Dorsolateral prefrontal cortex (tissue), 120 donors: ENCODE measurements at regions of chr2 and their contacts with region 1.

Region 1: GRCh38 chr2:161586517-161587167 is 37.6 kb upstream of the SLC4A10 start:
- DNase-seq: no peak
- H3K4me3 ChIP-seq: peak overlapping the region in 39 of 59 donors; percentile 0 to 50 (median 23)
- H3K27ac ChIP-seq: peak overlapping the region in 39 of 59 donors; percentile 5 to 83 (median 50)
- H3K27me3 ChIP-seq: no peaks in the 10 kb centered on the region
- CTCF ChIP-seq: peak; percentile 56 to 86 (median 74)

Region 2: GRCh38 chr2:161651547-161651946 is 64.9 kb after region 1 on chr2:
- intact Hi-C with region 1: no loop called
- DNase-seq: peak in 1 of 10 donors; percentile 30
- H3K4me3 ChIP-seq: no peak overlapping the region
- H3K27ac ChIP-seq: no peak overlapping the region
- H3K27me3 ChIP-seq: no peaks in the 10 kb centered on the region
- CTCF ChIP-seq: no peak

Region 3: DNA sequence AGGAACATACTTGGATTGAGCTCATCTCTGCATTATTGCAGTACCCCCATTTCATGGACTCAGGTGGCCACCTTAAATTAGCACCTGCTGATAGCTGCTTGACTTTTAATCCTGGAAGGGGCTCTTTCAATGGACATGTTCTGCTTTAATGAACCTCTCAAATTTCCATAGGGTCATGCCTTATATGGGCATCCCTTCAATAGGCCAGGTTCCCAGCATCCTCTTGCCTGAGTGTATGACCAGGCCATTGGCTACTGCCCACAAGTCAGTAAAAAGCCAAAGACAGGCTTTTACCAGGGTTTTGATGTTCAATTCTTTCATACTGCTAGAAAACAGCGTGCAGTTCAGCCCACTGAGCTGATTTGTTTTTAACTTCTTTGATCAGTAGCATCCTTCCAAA is 153.1 kb after region 1 on chr2:
- intact Hi-C with region 1: no loop called
- DNase-seq: no peak
- H3K4me3 ChIP-seq: no peak overlapping the region
- H3K27ac ChIP-seq: no peak overlapping the region
- H3K27me3 ChIP-seq: no peaks in the 10 kb centered on the region
- CTCF ChIP-seq: no peak

Region 4: GRCh38 chr2:161946489-161947107 is 360.0 kb after region 1 on chr2:
- intact Hi-C with region 1: loop called (anchors 2 to 5 kb)
- DNase-seq: no peak
- H3K4me3 ChIP-seq: no peak overlapping the region
- H3K27ac ChIP-seq: peak overlapping the region in 23 of 59 donors; percentile 1 to 77 (median 37)
- H3K27me3 ChIP-seq: no peaks in the 10 kb centered on the region
- CTCF ChIP-seq: peak; percentile 30 to 81 (median 67)

Region 5: DNA sequence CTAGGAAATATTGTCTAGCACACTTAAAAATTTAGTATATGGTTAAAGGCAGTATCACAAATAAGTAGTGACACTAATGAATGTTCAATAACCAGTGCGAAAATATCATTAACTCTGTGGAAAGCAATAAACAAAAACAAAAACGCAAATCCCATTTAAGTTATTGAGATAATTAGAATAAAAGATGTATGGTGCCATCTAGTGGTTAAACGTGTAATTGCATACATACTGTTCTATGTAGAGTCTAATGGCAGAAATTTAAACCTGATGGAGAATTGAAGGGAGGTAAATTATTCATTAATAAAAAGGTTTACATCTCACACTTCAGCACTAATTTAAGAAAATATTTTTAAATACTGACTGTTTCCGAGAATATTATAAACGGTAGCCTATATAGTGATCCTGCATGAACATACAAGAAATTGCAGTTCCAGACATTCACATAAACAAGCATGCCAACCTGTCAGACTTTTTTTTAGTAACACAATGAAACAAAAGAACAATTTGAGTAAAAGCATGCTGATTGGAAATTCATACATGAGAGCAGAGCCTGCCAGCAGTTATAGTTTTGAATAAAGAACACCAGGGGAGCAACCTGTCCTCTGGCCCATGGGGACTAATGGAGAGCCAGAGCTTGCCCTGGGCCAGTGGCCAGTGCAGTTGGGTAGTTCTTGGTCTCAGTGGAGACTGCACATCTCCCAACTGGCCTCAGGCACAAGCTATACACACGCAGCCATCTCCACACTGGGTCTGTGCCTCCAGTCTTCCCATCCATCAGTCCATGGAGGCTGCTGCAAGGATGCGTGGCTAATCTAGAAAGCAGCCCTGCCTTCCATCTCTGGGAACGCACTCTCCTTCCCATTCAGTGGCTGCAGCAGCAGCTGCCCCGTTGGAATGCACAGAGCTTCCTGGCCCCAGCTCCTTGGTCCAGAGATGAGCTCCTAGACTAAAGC is 537.4 kb after region 1 on chr2:
- intact Hi-C with region 1: loop called (anchors 2 to 10 kb)
- DNase-seq: no peak
- H3K4me3 ChIP-seq: no peak overlapping the region
- H3K27ac ChIP-seq: peak overlapping the region in 13 of 59 donors; percentile 4 to 76 (median 23)
- H3K27me3 ChIP-seq: no peaks in the 10 kb centered on the region
- CTCF ChIP-seq: peak; percentile 70 to 97 (median 87)

Region 6: DNA sequence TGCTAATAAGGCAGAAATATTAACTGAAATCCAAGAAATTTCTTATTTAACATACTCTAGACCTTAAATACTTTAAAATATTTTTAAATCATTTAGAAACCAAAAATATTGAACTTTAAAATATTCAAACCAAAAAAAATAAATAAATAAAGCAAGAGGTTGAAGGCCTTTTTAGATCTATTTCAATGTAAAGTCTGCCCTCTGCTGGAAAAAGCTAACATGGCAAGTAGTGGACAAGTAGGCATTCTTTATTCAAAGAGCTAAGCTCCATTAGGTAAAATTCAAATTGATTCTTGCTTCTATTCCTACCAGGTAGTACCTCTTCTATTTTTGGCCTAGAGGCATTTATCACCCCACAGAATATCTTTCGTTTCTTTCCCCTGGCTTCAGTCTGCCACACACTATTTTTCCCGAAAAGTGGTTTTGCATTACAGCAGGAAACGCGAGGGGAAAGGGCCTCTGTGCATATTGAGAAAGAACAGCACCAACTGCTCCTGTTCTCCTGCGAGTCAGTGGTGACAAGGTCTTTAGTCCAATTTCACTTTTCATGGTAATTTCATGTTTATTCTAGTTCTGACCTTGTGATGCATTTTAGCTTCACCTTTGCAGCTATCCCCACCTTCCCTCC is 711.4 kb after region 1 on chr2:
- intact Hi-C with region 1: loop called in 1 of 2 experiments (anchors 10 kb)
- DNase-seq: peak in 3 of 10 donors; percentile 37 to 71 (median 45)
- H3K4me3 ChIP-seq: no peak overlapping the region
- H3K27ac ChIP-seq: peak overlapping the region in 47 of 59 donors; percentile 1 to 86 (median 61)
- H3K27me3 ChIP-seq: no peaks in the 10 kb centered on the region
- CTCF ChIP-seq: peak; percentile 80 to 98 (median 92)